ENCODE measurements at regions of chr10 and their contacts with region 1.

Region 1: GRCh38 chr10:61903221-61903927 is 1.9 kb downstream of the ARID5B start:
- DNase-seq: peak; percentile 46 to 67
- ATAC-seq: peak; percentile 71 to 90 (median 79)
- H3K4me3 ChIP-seq: peak overlapping the region; percentile 34 to 94 (median 76)
- H3K27ac ChIP-seq: peak overlapping the region; percentile 72 to 99 (median 94)
- H3K4me1 ChIP-seq: peaks cover 6 to 41% (median 17%) of the 10 kb centered on the region in 9 donors
- H3K27me3 ChIP-seq: no peaks in the 10 kb centered on the region
- CTCF ChIP-seq: peak in 6 of 9 donors; percentile 13 to 49 (median 40)

Region 2: GRCh38 chr10:61943674-61944410 is 40.5 kb after region 1 on chr10:
- intact Hi-C with region 1: loop called in 1 of 10 experiments (anchors 5 kb)
- DNase-seq: no peak
- ATAC-seq: peak in 6 of 8 donors; percentile 57 to 77 (median 72)
- H3K4me3 ChIP-seq: peak overlapping the region in 5 of 10 donors; percentile 6 to 29 (median 13)
- H3K27ac ChIP-seq: peak overlapping the region in 9 of 10 donors; percentile 23 to 88 (median 64)
- H3K4me1 ChIP-seq: peaks cover 0 to 67% (median 18%) of the 10 kb centered on the region in 9 donors
- H3K27me3 ChIP-seq: no peaks in the 10 kb centered on the region
- CTCF ChIP-seq: peak in 5 of 9 donors; percentile 8 to 48 (median 33)

Region 3: DNA sequence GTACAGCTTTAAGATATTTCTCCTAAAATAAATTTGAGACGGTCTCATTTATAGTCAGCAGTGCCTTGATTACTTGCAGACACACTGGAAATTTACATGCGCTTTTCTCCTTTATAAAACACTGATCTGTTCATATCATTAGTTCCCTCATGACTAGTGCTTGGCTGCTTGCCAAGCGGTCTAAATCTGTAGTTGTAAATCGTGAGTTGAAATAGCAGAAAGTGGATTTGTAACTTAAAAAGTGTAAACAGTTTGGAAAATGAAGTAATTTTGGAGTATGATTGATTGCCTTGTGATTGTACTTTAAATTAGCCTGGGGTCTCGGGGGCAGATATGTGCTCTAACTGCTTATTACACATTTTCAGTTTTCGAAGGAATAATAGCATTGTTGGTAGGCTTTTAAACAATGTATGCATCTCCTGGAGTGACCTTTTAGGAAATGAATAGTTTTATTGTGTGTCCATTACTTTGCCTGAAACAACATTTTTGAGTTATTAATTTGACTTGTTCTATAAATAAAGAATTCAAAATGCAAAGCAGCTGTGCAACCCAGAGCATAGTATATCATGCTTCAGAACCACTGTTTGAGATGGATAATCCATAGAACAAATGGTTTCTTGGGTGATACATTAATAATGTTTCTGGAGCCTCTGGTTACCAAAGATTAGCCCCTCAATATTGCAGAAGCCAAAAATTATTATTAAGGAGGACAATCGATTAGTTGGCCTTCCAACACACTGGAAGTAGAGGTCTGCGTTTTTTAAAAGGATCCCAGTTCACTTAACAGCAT is 71.4 kb after region 1 on chr10:
- intact Hi-C with region 1: loop called in 4 of 10 experiments (anchors 2 to 10 kb)
- DNase-seq: peak; percentile 33 to 72
- ATAC-seq: peak in 6 of 8 donors; percentile 64 to 80 (median 72)
- H3K4me3 ChIP-seq: peak overlapping the region in 1 of 10 donors; percentile 1
- H3K27ac ChIP-seq: peak overlapping the region in 9 of 10 donors; percentile 43 to 73 (median 59)
- H3K4me1 ChIP-seq: peaks cover 9 to 71% (median 52%) of the 10 kb centered on the region in 9 donors
- H3K27me3 ChIP-seq: no peaks in the 10 kb centered on the region
- CTCF ChIP-seq: no peak

Region 4: DNA sequence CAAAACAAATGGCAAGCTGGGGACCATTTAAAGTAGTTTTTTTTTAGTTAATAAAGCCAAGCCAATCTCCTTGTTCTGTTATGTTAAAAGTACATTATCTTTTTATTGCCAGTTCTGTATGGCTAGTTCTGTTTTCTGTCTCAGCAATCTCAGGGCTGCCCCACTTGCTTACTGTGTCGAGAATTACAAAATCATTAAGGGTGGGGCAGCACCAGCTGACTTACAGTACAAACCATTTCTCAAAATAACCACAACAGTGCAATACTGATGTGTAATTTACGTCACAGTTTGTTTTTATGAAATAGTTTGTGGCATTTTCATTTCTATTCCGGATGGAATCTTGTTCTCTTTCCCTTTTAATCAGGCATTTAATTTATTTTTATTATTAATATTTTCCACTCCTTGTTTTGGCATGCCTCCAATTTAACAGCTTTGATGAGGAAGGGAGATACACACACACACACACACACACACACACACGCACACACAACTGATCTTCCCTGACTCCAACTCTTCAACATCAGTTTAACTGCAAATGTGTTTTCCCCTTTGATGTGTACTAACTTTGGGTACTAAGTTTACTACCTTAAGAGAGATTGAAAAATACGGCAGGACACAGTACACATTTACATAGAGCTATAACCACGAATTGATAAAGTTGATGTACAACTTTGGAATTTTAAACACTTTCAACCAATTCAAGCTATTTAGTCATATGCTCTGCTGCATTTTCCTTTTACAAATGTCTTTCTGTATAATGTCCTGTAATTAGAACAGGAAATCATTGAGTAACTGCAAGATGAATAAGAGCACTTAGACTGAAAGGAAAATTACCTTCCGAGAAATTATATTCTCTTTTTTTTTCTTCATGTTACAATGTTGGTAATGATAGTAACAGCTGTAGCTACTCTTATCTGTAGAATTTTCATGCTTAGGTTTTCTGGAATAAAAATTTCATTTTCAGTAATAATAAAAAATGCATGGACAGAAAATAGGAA is 89.6 kb after region 1 on chr10:
- intact Hi-C with region 1: loop called in 4 of 10 experiments (anchors 5 to 10 kb)
- DNase-seq: peak in 1 of 2 donors; percentile 54
- ATAC-seq: peak; percentile 89 to 97 (median 94)
- H3K4me3 ChIP-seq: peak overlapping the region in 7 of 10 donors; percentile 13 to 37 (median 32)
- H3K27ac ChIP-seq: peak overlapping the region in 9 of 10 donors; percentile 44 to 90 (median 76)
- H3K4me1 ChIP-seq: peaks cover 4 to 66% (median 35%) of the 10 kb centered on the region in 9 donors
- H3K27me3 ChIP-seq: no peaks in the 10 kb centered on the region
- CTCF ChIP-seq: no peak

Region 5: GRCh38 chr10:62050893-62051433 is 147.6 kb after region 1 on chr10:
- intact Hi-C with region 1: loop called in 3 of 10 experiments (anchors 5 kb)
- DNase-seq: peak; percentile 31 to 83
- ATAC-seq: peak; percentile 48 to 85 (median 78)
- H3K4me3 ChIP-seq: peak overlapping the region in 9 of 10 donors; percentile 42 to 68 (median 59)
- H3K27ac ChIP-seq: peak overlapping the region; percentile 88 to 98 (median 94)
- H3K4me1 ChIP-seq: peaks cover 16 to 91% (median 77%) of the 10 kb centered on the region in 9 donors
- H3K27me3 ChIP-seq: no peaks in the 10 kb centered on the region
- CTCF ChIP-seq: no peak